ENCODE measurements at regions of chr20 and their contacts with region 1.

Region 1: DNA sequence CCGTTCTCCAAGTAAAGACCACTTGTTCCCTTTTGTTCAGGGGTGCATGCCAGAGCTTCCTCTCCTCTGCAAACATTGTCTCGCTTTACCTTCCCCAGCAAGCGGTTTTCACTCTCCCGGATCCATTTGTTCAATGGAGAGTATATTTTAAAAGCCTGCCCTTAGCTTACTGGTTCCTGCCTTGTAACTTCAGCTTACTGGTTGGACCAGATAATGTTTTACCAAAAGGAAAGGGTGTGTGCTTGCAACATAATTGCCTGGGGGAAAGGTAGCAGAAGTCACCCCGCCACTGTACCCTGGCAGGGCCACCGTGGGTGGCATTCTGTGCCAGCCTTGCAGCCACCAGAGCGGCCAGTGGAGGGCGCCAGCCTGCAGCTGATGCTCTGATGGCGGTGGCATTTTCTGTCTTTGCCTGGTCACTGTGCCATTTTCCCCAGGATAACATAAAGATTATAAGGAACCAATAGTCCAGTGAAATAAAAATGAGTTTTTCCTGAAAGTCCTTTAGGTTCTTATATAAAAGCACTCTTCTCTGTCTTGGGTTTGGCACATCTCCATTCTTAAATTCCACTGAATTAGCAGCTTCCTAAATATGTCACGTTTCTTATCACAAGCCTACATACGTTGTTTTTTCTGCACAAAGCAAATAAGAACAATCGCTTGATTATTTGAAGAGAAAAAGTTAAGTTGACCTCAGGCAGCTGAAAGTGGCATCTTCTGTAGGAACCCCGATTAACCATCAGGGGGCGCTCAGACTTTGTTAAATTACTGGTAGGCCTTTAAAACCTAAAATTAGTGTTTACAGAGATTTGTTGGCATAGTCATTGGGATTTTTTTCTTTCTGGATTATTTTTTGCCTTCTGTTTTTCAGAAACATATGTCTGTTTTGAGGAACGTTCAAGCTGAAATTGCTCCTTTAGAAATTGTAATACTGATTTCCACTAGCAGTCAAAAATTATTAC is 67.4 kb upstream of the XRN2 start:
- DNase-seq: peak; percentile 75
- H3K4me3 Mint-ChIP-seq: no peak overlapping the region
- H3K27ac Mint-ChIP-seq: no peak overlapping the region
- H3K4me1 Mint-ChIP-seq: peaks cover 3% of the 10 kb centered on the region
- H3K27me3 Mint-ChIP-seq: no peaks in the 10 kb centered on the region

Region 2: GRCh38 chr20:20860078-20860806 is 375.5 kb before region 1 on chr20:
- CTCF ChIA-PET with region 1: interaction called, 5 read pairs
- POLR2A ChIA-PET with region 1: no interaction called
- intact Hi-C with region 1: loop called (anchors 10 kb)
- DNase-seq: peak; percentile 91
- H3K4me3 Mint-ChIP-seq: no peak overlapping the region
- H3K27ac Mint-ChIP-seq: no peak overlapping the region
- H3K4me1 Mint-ChIP-seq: no peaks in the 10 kb centered on the region
- H3K27me3 Mint-ChIP-seq: peaks cover 14% of the 10 kb centered on the region

Region 3: GRCh38 chr20:21303061-21303871 is 67.5 kb after region 1 on chr20 and contains the start of gene XRN2:
- CTCF ChIA-PET with region 1: interaction called, 33 read pairs
- POLR2A ChIA-PET with region 1: interaction called, 3 read pairs
- intact Hi-C with region 1: no loop called
- DNase-seq: peak; percentile 97
- H3K4me3 Mint-ChIP-seq: peak within 1 kb of the TSS; percentile 93
- H3K27ac Mint-ChIP-seq: peak within 1 kb of the TSS; percentile 99
- H3K4me1 Mint-ChIP-seq: peaks cover 34% of the 10 kb centered on the region
- H3K27me3 Mint-ChIP-seq: no peaks in the 10 kb centered on the region
- total RNA-seq, gene XRN2: 91.0 to 94.4 TPM

Region 4: GRCh38 chr20:21395666-21396598 is 160.2 kb after region 1 on chr20:
- CTCF ChIA-PET with region 1: interaction called, 19 read pairs
- POLR2A ChIA-PET with region 1: no interaction called
- intact Hi-C with region 1: loop called (anchors 2 kb)
- DNase-seq: peak; percentile 64
- H3K4me3 Mint-ChIP-seq: peak overlapping the region; percentile 33
- H3K27ac Mint-ChIP-seq: no peak overlapping the region
- H3K4me1 Mint-ChIP-seq: peaks cover 19% of the 10 kb centered on the region
- H3K27me3 Mint-ChIP-seq: peaks cover 72% of the 10 kb centered on the region

Region 5: DNA sequence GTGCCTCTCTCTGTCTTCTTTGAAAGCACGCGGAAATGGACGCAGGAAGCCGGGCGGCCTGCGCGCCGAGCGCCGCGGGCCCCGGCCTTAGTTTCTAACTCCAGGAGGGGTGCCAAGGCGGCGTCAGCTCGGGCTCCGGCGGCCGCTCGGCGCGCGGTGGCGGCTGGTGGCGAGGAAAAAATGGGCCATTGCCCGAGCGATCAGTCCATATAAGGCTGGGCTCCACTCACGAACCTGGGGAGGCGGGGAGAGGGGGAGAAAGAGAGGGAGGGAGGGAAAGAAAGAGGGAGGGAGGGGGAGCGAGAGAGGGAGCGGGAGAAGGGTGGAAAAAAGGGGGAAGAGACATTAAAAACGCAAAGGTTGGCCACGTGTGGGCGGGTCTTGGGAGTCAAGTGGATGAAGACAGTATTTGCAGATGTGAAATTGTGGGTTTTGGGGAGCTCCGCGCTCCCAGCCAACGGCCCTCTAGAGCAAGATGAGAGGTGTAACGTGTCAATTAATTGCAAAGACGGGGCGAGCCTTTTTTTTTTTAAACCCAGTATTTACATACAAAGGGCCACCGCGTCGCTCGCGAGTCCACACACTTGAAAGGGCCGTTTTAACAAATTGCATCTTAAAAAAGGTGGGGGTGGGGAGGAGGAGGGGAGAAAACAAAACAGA is 278.2 kb after region 1 on chr20 and contains the start of gene NKX2-2:
- CTCF ChIA-PET with region 1: interaction called, 17 read pairs
- POLR2A ChIA-PET with region 1: no interaction called
- intact Hi-C with region 1: no loop called
- DNase-seq: no peak
- H3K4me3 Mint-ChIP-seq: peak within 1 kb of the TSS; percentile 35
- H3K27ac Mint-ChIP-seq: no peak within 1 kb of the TSS
- H3K4me1 Mint-ChIP-seq: peaks cover 46% of the 10 kb centered on the region
- H3K27me3 Mint-ChIP-seq: peaks cover 77% of the 10 kb centered on the region
- total RNA-seq, gene NKX2-2: not detected

Region 6: GRCh38 chr20:21577551-21577950 is 341.8 kb after region 1 on chr20:
- CTCF ChIA-PET with region 1: interaction called, 26 read pairs
- POLR2A ChIA-PET with region 1: no interaction called
- intact Hi-C with region 1: loop called (anchors 5 kb)
- DNase-seq: no peak
- H3K4me3 Mint-ChIP-seq: no peak overlapping the region
- H3K27ac Mint-ChIP-seq: no peak overlapping the region
- H3K4me1 Mint-ChIP-seq: no peaks in the 10 kb centered on the region
- H3K27me3 Mint-ChIP-seq: peaks cover 17% of the 10 kb centered on the region

Region 7: DNA sequence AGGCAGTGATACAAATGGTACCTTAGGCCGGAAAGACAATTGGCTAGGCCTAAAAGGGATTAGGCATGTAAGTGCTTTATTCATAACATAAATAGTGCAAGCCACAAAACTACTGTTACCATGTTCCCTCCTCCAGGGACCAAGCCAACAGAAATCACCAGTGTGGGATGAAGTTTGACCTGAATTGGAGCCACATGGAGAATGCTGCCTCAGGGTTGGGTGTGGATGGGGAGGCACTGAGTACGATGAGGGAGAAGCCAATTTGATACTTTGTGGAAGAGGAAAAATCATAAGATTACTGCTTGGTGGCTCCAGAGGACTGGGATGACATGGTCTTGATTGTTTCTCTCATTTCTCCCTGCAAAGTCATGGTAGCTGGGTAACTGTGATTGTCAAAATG is 520.2 kb after region 1 on chr20:
- CTCF ChIA-PET with region 1: no interaction called
- POLR2A ChIA-PET with region 1: no interaction called
- intact Hi-C with region 1: no loop called
- DNase-seq: no peak
- H3K4me3 Mint-ChIP-seq: no peak overlapping the region
- H3K27ac Mint-ChIP-seq: no peak overlapping the region
- H3K4me1 Mint-ChIP-seq: no peaks in the 10 kb centered on the region
- H3K27me3 Mint-ChIP-seq: no peaks in the 10 kb centered on the region

Measured in activated CD4-positive, alpha-beta memory T cell treated with anti-CD3 and anti-CD28 coated beads for 36 hours (primary cell).